ENCODE measurements at regions of chr6 and their contacts with region 1.

Region 1: DNA sequence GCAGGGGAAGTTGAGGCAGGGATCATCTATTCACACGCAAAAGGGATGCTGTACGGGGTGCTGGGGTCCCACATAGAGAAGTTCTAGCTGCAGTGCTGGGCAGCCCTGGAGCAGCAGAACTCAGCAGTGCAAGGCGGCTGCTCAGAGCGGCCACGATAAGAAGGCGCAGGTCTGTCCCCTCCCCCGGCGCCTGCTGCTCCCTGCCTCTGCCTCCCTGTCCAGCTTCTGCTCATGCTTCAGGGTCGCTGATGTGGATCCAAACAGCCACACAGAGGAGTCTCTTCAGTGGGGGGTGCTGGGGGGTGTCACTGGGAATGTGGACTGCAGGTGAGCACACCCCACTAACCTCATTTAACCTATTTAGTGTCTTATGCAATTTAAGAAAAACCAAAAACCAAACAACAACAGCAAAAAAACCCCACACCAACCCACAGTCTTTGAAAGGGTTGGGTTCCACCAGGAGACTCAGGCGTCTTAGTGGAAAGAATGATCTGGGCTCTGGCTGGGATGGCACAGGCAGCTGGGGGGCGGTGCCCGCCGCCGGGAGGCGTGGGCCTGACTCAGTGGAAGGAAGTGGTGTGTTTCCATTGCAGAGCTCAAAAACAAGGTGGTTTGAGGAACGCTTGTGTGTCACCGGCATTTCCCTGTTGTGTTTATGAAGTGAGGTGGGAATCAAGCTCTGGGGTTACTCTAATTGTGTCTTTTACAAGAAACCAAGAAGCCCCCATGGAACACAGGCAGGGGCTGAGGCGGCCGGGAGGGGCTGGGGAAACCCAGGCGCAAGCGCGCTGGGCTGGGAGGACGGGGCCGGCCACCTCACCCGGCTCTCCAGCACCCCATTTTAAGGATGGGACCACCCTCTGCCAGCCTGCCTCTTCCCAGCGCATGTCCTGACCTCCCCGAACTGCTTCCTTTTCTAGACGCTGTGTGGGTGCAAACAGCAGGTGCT is 55.1 kb downstream of the IRF4 start:
- DNase-seq: peak; percentile 96
- ATAC-seq: peak; percentile 77
- H3K4me3 Mint-ChIP-seq: peak overlapping the region; percentile 65
- H3K27ac Mint-ChIP-seq: peak overlapping the region; percentile 90
- H3K4me1 Mint-ChIP-seq: peaks cover 52% of the 10 kb centered on the region
- H3K27me3 Mint-ChIP-seq: no peaks in the 10 kb centered on the region

Region 2: DNA sequence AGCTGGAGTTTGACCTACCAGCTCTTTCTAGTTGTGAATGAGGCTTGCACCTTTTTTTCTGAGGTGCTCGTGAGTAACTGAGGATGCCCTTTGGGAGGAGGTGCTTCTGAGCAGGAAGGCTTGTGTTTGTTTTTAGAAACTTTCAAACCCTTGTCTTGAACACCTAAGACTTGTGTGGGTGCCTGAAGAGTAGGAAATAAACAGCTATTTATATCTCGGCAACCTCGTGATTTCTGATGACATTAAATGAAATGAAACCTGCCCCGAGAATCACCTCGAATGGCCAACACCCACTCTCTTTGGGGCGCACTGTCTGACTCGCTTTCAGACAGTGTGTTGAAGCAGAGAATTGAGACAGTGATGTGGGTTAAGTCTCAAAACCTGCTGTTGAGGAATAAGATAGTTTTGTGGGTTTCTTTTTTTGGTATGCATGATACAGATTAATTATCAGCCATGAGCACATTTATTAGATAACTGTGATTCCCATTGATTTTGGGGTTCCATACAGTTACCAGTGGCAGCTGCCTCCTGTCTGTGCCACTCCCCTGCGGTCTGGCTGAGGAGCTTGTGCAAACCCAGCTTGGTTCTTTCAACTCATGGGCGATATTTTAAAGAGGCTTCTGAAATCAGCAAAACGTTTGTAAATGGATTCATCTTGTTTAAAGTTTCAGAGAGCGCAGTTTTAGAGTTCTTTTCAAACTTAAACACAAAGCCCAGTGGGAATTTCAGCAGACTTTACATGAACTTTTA is 46.7 kb before region 1 on chr6:
- CTCF ChIA-PET with region 1: interaction called, 6 read pairs
- POLR2A ChIA-PET with region 1: interaction called, 15 read pairs
- intact Hi-C with region 1: loop called (anchors 2 to 5 kb)
- DNase-seq: peak; percentile 78
- ATAC-seq: peak; percentile 28
- H3K4me3 Mint-ChIP-seq: peak overlapping the region; percentile 68
- H3K27ac Mint-ChIP-seq: peak overlapping the region; percentile 88
- H3K4me1 Mint-ChIP-seq: peaks cover 91% of the 10 kb centered on the region
- H3K27me3 Mint-ChIP-seq: no peaks in the 10 kb centered on the region

Region 3: DNA sequence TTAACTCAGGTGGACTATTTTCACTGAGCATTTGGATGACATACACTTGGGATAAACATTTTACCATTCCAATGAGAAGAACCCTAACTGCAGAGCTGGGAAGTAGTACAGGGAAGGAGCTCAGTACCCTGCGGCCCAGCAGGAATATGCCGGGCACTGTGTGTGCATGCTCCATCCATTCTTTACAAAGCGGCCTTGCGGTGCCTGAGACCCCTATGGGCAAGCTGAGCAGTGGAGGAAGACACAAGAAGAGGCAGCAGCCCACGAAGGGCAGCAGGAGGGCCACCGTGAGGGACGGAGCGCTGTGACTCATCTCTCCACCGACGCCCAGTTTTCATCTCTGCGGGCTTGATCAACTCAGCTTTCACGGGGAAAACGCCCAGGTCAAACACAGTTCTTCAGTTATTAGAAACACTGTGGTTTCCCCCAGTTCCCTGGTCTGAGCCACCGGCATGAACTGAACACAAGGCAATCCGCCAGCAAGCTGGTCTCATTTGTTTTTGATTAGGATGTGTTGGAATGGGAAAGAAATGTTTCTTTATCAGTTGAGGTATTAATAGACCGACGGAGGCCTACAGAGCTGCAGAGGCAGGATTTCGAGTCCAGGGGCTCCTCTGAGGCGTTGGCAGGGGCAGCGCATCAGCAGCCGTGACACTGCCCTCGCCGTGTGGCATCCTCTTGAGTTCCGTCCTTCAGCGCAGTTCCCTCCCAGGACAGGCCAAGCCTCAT is 10.2 kb before region 1 on chr6:
- CTCF ChIA-PET with region 1: interaction called, 24 read pairs
- POLR2A ChIA-PET with region 1: interaction called, 16 read pairs
- intact Hi-C with region 1: loop called (anchors 1 kb)
- DNase-seq: no peak
- ATAC-seq: no peak
- H3K4me3 Mint-ChIP-seq: no peak overlapping the region
- H3K27ac Mint-ChIP-seq: no peak overlapping the region
- H3K4me1 Mint-ChIP-seq: peaks cover 43% of the 10 kb centered on the region
- H3K27me3 Mint-ChIP-seq: no peaks in the 10 kb centered on the region

Region 4: GRCh38 chr6:490251-491037 is 43.8 kb after region 1 on chr6:
- CTCF ChIA-PET with region 1: interaction called, 4 read pairs
- POLR2A ChIA-PET with region 1: interaction called, 23 read pairs
- intact Hi-C with region 1: loop called in 1 of 2 experiments (anchors 1 kb)
- DNase-seq: peak; percentile 71
- ATAC-seq: peak; percentile 62
- H3K4me3 Mint-ChIP-seq: peak overlapping the region; percentile 58
- H3K27ac Mint-ChIP-seq: peak overlapping the region; percentile 97
- H3K4me1 Mint-ChIP-seq: peaks cover 95% of the 10 kb centered on the region
- H3K27me3 Mint-ChIP-seq: no peaks in the 10 kb centered on the region

Region 5: GRCh38 chr6:506508-506907 is 59.8 kb after region 1 on chr6:
- CTCF ChIA-PET with region 1: interaction called, 4 read pairs
- POLR2A ChIA-PET with region 1: interaction called, 7 read pairs
- intact Hi-C with region 1: loop called (anchors 1 to 2 kb)
- DNase-seq: peak; percentile 77
- ATAC-seq: peak; percentile 59
- H3K4me3 Mint-ChIP-seq: peak overlapping the region; percentile 13
- H3K27ac Mint-ChIP-seq: peak overlapping the region; percentile 97
- H3K4me1 Mint-ChIP-seq: peaks cover 100% of the 10 kb centered on the region
- H3K27me3 Mint-ChIP-seq: no peaks in the 10 kb centered on the region

Region 6: GRCh38 chr6:558089-558488 is 111.4 kb after region 1 on chr6:
- CTCF ChIA-PET with region 1: interaction called, 3 read pairs
- POLR2A ChIA-PET with region 1: interaction called, 9 read pairs
- intact Hi-C with region 1: loop called in 1 of 2 experiments (anchors 2 kb)
- DNase-seq: no peak
- ATAC-seq: no peak
- H3K4me3 Mint-ChIP-seq: peak overlapping the region; percentile 15
- H3K27ac Mint-ChIP-seq: peak overlapping the region; percentile 90
- H3K4me1 Mint-ChIP-seq: peaks cover 63% of the 10 kb centered on the region
- H3K27me3 Mint-ChIP-seq: no peaks in the 10 kb centered on the region

Measured in activated CD4-positive, alpha-beta T cell treated with anti-CD3 and anti-CD28 coated beads for 36 hours (primary cell).